CD4-positive, alpha-beta T cell (primary cell): ENCODE measurements at regions of chr10 and their contacts with region 1.

Region 1: DNA sequence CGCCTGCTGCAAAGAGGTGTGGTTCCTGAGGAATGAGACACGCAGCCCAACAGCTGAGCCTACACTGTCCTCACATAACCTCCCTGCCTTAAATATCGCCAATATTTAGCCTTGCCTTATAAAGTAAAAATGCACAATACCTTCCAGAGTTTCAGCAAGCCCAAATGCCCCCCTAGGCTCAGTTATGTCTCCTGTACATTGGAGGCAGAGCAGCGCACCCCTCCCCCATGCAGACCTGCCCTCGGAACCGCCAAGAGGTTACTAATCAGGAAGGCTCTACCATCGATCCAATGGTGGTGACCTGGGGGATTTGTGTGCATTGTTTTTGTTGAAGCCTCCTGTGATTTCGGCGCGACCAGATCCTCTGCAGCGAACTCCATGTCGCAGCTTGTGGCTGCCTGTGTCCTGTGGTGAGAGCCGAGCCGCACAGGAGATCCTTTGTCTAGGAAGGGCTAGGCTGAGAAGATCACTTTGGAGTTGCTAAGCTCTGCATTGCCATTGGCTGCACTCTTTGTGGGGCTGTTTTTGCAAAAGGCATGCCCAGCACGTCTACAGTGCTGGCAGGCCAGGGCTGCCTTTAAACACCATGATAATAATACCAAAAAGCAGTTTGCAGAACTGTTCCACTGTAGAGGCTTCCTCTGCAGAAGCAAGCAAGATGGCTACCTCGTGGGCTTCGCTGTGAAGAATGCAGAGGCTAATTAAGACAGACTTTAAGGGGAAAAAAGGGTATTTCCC is 40.1 kb downstream of the TET1 start:
- DNase-seq: peak; percentile 24 to 69 (median 38)
- ATAC-seq: peak; percentile 93
- H3K4me3 ChIP-seq: peak overlapping the region; percentile 60
- H3K4me3 Mint-ChIP-seq: peak overlapping the region; percentile 90
- H3K27ac ChIP-seq: no peak overlapping the region
- H3K27ac Mint-ChIP-seq: peak overlapping the region; percentile 79
- H3K4me1 ChIP-seq: peaks cover 10% of the 10 kb centered on the region
- H3K4me1 Mint-ChIP-seq: peaks cover 51% of the 10 kb centered on the region
- H3K27me3 ChIP-seq: no peaks in the 10 kb centered on the region
- H3K27me3 Mint-ChIP-seq: no peaks in the 10 kb centered on the region
- CTCF ChIP-seq: no peak

Region 2: GRCh38 chr10:68560186-68560942 is 39.8 kb before region 1 on chr10 and contains the start of gene TET1:
- CTCF ChIA-PET with region 1: no interaction called
- POLR2A ChIA-PET with region 1: interaction called, 5 read pairs
- intact Hi-C with region 1: loop called in 1 of 2 experiments (anchors 5 kb)
- DNase-seq: peak in 4 of 14 experiments; percentile 4 to 27 (median 12)
- ATAC-seq: peak; percentile 39
- H3K4me3 ChIP-seq: peak within 1 kb of the TSS; percentile 41
- H3K4me3 Mint-ChIP-seq: peak within 1 kb of the TSS; percentile 81
- H3K27ac ChIP-seq: no peak within 1 kb of the TSS
- H3K27ac Mint-ChIP-seq: no peak within 1 kb of the TSS
- H3K4me1 ChIP-seq: peaks cover 25% of the 10 kb centered on the region
- H3K4me1 Mint-ChIP-seq: peaks cover 30% of the 10 kb centered on the region
- H3K27me3 ChIP-seq: peaks cover 51% of the 10 kb centered on the region in 2 experiments
- H3K27me3 Mint-ChIP-seq: peaks cover 74% of the 10 kb centered on the region
- CTCF ChIP-seq: no peak
- total RNA-seq, gene TET1: 1.5 TPM